ENCODE measurements at regions of chr5 and their contacts with region 1.

Region 1: DNA sequence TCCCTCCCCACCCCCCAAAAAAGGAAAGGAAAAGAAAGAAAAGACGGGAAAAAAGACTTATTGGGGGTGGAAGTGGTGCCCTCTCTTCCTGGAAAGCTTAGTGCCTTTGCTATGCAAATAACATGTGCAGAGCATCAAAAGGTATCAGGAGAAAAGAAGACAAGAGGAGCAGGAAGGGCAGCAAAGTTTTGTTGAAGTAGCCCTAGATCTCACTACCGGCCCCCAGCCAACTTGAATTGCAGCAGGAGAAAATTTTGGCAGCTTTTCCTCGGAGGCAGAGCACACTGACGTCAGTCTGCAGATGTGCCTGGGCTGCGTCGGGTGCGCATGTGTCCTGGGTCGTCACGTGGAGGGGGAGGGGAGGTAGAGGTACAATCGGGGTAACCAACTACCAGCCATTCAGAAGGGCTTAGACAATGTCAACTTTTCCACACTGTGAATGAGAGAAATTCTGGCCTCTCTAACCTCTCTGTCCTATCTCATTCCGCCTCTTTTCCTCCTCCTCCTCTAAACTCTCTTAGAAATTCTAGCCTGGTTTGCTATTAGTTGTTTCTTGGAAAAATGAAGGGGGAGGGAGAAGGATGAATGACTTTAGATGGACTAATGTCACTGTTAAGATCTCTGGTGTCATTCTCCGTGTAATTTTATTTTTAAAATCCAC is at the start of gene ADAMTS6:
- DNase-seq: peak; percentile 24 to 84 (median 71)
- ATAC-seq: peak; percentile 82 to 92 (median 85)
- H3K4me3 ChIP-seq: peak within 1 kb of the TSS; percentile 73 to 85
- H3K4me3 Mint-ChIP-seq: no peak within 1 kb of the TSS
- H3K27ac ChIP-seq: peak within 1 kb of the TSS; percentile 63
- H3K27ac Mint-ChIP-seq: peak within 1 kb of the TSS; percentile 90 to 95
- H3K4me1 ChIP-seq: peaks cover 14 to 16% of the 10 kb centered on the region in 2 experiments
- H3K4me1 Mint-ChIP-seq: peaks cover 10 to 18% (median 14%) of the 10 kb centered on the region in 3 donors
- H3K27me3 ChIP-seq: peaks cover 0 to 3% of the 10 kb centered on the region in 2 experiments
- H3K27me3 Mint-ChIP-seq: no peaks in the 10 kb centered on the region
- total RNA-seq, gene ADAMTS6: 2.0 to 5.3 (median 4.0) TPM

Region 2: DNA sequence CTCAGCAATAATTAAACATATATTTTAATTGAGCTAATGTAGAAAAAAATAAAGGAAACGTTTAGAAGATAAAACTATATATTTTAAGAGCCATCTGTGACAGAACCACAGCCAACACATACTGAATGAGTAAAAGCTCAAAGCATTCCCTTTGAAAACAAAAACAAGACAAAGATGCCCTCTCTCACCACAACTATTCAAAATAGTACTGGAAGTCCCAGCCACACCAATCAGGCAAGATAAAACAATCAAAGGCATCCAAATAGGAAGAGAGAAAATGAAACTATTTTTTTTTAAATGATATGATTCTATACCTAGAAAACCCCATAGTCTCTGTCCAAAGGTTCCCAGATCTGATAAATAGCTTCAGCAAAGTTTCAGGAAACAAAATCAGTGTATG is 1781.5 kb before region 1 on chr5:
- CTCF ChIA-PET with region 1: no interaction called
- POLR2A ChIA-PET with region 1: no interaction called
- DNase-seq: no peak
- ATAC-seq: no peak
- H3K4me3 ChIP-seq: no peak overlapping the region
- H3K4me3 Mint-ChIP-seq: no peak overlapping the region
- H3K27ac ChIP-seq: no peak overlapping the region
- H3K27ac Mint-ChIP-seq: no peak overlapping the region
- H3K4me1 ChIP-seq: no peaks in the 10 kb centered on the region
- H3K4me1 Mint-ChIP-seq: no peaks in the 10 kb centered on the region
- H3K27me3 ChIP-seq: no peaks in the 10 kb centered on the region
- H3K27me3 Mint-ChIP-seq: no peaks in the 10 kb centered on the region

Region 3: DNA sequence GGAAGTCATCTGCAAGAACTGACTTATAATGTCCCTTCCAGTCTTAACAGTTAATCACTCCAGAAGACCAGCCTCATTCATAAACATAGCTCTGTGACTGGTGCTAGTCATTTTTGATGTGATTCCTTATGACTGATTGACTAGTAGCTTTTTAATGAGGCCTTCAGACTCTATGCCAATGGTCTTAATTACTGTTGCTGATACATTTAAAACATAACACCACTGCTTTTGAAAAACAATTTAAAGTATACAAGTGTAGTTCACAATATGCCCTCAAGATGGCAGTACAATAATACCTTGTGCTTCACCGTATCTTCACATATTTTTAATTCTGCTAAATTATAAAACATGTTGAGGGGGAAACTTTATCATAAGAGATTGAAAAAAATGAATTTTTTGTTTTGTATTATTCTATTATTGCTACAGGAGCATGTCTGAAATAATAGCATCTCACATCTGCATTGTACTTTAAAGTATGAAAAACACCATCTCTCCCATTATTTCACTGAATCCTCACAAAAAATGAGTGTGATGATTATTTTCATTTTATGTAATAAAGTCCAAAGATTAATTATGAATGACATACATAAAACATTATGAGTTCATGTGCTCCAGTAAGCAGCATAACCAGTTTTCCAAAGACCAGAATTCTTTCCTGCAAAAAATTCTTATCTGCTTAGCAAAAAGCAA is 846.6 kb before region 1 on chr5:
- CTCF ChIA-PET with region 1: interaction called in 1 of 2 experiments, 20 read pairs
- POLR2A ChIA-PET with region 1: no interaction called
- DNase-seq: peak in 1 of 35 experiments; percentile 63
- ATAC-seq: no peak
- H3K4me3 ChIP-seq: no peak overlapping the region
- H3K4me3 Mint-ChIP-seq: no peak overlapping the region
- H3K27ac ChIP-seq: no peak overlapping the region
- H3K27ac Mint-ChIP-seq: no peak overlapping the region
- H3K4me1 ChIP-seq: no peaks in the 10 kb centered on the region
- H3K4me1 Mint-ChIP-seq: peaks cover 0 to 2% (median 0%) of the 10 kb centered on the region in 3 donors
- H3K27me3 ChIP-seq: peaks cover 0 to 11% of the 10 kb centered on the region in 2 experiments
- H3K27me3 Mint-ChIP-seq: peaks cover 13 to 17% of the 10 kb centered on the region in 2 donors

Region 4: GRCh38 chr5:64811050-64811640 is 670.6 kb before region 1 on chr5:
- CTCF ChIA-PET with region 1: interaction called, 17 to 117 read pairs
- POLR2A ChIA-PET with region 1: interaction called, 3 read pairs
- DNase-seq: peak in 6 of 35 experiments; percentile 0 to 61 (median 4)
- ATAC-seq: no peak
- H3K4me3 ChIP-seq: no peak overlapping the region
- H3K4me3 Mint-ChIP-seq: no peak overlapping the region
- H3K27ac ChIP-seq: no peak overlapping the region
- H3K27ac Mint-ChIP-seq: no peak overlapping the region
- H3K4me1 ChIP-seq: no peaks in the 10 kb centered on the region
- H3K4me1 Mint-ChIP-seq: no peaks in the 10 kb centered on the region
- H3K27me3 ChIP-seq: no peaks in the 10 kb centered on the region
- H3K27me3 Mint-ChIP-seq: no peaks in the 10 kb centered on the region

Region 5: GRCh38 chr5:64958757-64959391 is 522.9 kb before region 1 on chr5:
- CTCF ChIA-PET with region 1: interaction called, 9 to 18 read pairs
- POLR2A ChIA-PET with region 1: interaction called in 1 of 2 experiments, 3 read pairs
- DNase-seq: peak in 1 of 35 experiments; percentile 47
- ATAC-seq: no peak
- H3K4me3 ChIP-seq: no peak overlapping the region
- H3K4me3 Mint-ChIP-seq: no peak overlapping the region
- H3K27ac ChIP-seq: no peak overlapping the region
- H3K27ac Mint-ChIP-seq: no peak overlapping the region
- H3K4me1 ChIP-seq: no peaks in the 10 kb centered on the region
- H3K4me1 Mint-ChIP-seq: no peaks in the 10 kb centered on the region
- H3K27me3 ChIP-seq: no peaks in the 10 kb centered on the region
- H3K27me3 Mint-ChIP-seq: no peaks in the 10 kb centered on the region

Region 6: DNA sequence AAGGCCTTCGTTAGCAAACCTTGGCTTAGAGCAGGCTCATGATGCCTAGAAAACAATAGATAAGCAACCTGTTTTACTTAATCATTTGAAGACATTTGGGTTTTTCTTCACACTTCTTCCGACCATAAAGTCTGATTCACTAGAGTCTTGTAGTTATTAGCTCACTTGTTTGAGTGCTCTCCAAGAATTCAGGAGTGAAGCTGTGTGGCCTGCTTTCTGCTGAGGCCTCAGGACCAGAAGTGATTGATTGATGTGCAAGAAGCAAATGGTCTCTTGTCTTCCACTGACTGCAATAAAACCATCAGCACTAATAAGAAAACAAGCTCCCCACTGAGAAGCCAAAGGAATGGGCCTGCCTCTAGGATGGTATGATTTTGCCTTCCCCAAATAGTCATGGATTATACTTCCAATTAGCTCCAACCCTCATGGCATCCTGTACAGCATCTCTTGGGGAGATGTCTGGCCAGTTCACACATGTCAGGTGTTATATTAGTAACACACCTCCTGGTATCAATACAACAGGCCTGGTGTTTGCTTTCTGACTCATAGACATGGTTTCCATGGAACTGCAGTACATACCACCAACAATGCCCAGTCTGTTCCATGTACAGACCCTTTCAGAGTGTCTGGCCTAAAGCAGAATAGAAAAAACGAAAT is 395.4 kb before region 1 on chr5:
- CTCF ChIA-PET with region 1: interaction called in 1 of 2 experiments, 3 read pairs
- POLR2A ChIA-PET with region 1: interaction called in 1 of 2 experiments, 10 read pairs
- DNase-seq: no peak
- ATAC-seq: no peak
- H3K4me3 ChIP-seq: no peak overlapping the region
- H3K4me3 Mint-ChIP-seq: no peak overlapping the region
- H3K27ac ChIP-seq: no peak overlapping the region
- H3K27ac Mint-ChIP-seq: no peak overlapping the region
- H3K4me1 ChIP-seq: no peaks in the 10 kb centered on the region
- H3K4me1 Mint-ChIP-seq: no peaks in the 10 kb centered on the region
- H3K27me3 ChIP-seq: no peaks in the 10 kb centered on the region
- H3K27me3 Mint-ChIP-seq: peaks cover 8% of the 10 kb centered on the region in 2 donors

Region 7: DNA sequence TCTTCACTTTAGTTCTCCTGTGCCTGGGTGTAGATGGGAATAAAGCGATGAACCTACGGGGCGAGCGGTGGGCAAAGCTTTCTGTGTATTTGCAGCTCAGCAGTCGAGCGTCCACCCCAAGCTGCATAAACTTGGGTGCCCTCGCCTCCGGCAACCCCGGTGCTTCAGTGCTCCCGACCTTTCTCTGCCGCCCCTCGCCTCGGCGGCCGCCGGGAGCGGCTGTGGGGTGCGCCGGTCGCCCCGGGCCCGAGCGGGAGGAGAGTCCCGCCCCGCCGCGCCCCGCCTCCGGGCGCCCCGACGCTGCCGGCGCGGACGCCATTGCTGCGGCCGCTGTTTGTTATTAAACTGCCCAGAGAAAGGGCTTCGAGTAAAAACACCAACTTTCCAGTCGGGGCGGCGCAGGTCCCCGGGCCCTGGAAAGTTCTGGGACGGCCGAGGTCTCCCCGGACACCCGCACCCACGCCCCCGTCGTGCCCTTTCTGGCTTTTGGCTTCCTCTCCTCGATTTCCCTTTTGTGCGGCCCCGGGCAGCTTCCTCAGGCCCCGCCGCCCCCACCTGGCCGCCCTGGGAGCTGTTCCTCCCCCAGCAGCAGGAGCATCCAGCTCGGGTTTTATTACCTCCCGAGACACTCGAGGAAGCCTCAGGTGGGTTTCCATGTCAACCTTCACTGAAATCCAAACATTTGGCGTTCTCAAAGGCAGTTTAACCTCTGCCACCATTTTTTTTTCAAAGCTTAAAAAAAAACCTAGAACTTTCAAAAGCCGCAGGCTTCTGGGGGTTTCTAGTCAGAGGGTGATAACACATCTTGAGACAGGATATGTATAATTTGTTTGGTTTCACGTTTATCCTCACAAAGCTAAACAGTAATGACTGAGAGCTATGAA is 378.7 kb before region 1 on chr5:
- CTCF ChIA-PET with region 1: interaction called, 5 to 12 read pairs
- POLR2A ChIA-PET with region 1: interaction called in 1 of 2 experiments, 6 read pairs
- DNase-seq: peak; percentile 15 to 76 (median 36)
- ATAC-seq: peak; percentile 76 to 84 (median 81)
- H3K4me3 ChIP-seq: peak overlapping the region; percentile 58 to 79
- H3K4me3 Mint-ChIP-seq: peak overlapping the region; percentile 72 to 85 (median 84)
- H3K27ac ChIP-seq: peak overlapping the region; percentile 83
- H3K27ac Mint-ChIP-seq: peak overlapping the region; percentile 80 to 97
- H3K4me1 ChIP-seq: peaks cover 18 to 19% of the 10 kb centered on the region in 2 experiments
- H3K4me1 Mint-ChIP-seq: peaks cover 39 to 51% (median 41%) of the 10 kb centered on the region in 3 donors
- H3K27me3 ChIP-seq: no peaks in the 10 kb centered on the region
- H3K27me3 Mint-ChIP-seq: no peaks in the 10 kb centered on the region

Region 8: GRCh38 chr5:65562731-65563701 is 81.3 kb after region 1 on chr5 and contains the starts of genes CENPK and PPWD1:
- CTCF ChIA-PET with region 1: interaction called in 1 of 2 experiments, 16 read pairs
- POLR2A ChIA-PET with region 1: interaction called in 1 of 2 experiments, 5 read pairs
- DNase-seq: peak; percentile 87 to 97 (median 95)
- ATAC-seq: peak; percentile 95 to 99 (median 97)
- H3K4me3 ChIP-seq: peak within 1 kb of the TSS; percentile 96 to 99
- H3K4me3 Mint-ChIP-seq: peak within 1 kb of the TSS; percentile 95 to 98 (median 96)
- H3K27ac ChIP-seq: peak within 1 kb of the TSS; percentile 97
- H3K27ac Mint-ChIP-seq: peak within 1 kb of the TSS; percentile 97 to 99
- H3K4me1 ChIP-seq: peaks cover 16 to 20% of the 10 kb centered on the region in 2 experiments
- H3K4me1 Mint-ChIP-seq: peaks cover 54 to 71% (median 68%) of the 10 kb centered on the region in 3 donors
- H3K27me3 ChIP-seq: no peaks in the 10 kb centered on the region
- H3K27me3 Mint-ChIP-seq: no peaks in the 10 kb centered on the region
- total RNA-seq, gene CENPK: 12.4 to 85.4 (median 50.5) TPM
- total RNA-seq, gene PPWD1: 79.2 to 102 (median 94.3) TPM